Activated naive CD4-positive, alpha-beta T cell treated with anti-CD3 and anti-CD28 coated beads for 36 hours (primary cell): ENCODE measurements at regions of chr6 and their contacts with region 1.

Region 1: DNA sequence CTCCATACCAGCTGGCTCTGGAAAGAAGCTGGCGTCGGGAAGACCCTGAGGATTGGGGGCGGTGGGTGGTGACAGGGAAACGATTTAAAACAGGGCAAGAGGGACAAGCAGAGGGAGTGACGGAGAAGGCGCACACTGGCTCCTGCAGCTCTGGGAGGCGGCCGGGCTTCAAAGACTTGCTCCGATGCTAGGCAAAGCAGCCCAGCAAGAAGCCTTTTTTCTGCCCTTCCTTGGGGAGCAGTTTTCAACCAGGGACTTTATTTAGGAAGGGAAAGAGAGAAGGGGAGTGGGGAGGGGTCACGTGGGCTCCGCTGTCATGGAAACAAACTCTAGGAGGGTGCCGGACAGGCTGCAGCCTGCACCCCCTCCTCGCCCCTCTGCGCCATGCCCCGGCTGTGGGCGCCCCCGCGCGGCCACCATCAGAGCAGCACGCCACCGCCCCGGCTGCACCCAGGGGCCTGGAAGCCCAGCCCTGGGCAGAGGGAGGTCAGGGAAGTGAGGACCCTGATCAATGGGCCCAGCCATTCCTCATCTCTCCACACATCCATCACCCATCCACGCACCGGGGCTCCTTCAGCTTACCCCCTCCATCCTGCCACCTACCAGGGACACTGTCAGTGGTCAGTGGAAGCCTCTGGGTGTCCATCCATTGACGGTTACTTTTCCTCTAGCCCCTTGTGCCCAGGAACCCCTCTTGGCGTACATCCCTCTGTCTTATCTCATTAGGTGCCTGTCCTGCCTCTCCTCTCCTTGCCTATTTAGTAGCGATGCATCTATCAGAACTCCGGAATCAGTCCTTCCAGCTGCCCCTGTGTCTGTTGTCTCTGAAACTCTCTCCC is 66.6 kb upstream of the CCDC167 start:
- DNase-seq: peak; percentile 72
- H3K4me3 Mint-ChIP-seq: no peak overlapping the region
- H3K27ac Mint-ChIP-seq: no peak overlapping the region
- H3K4me1 Mint-ChIP-seq: peaks cover 2% of the 10 kb centered on the region
- H3K27me3 Mint-ChIP-seq: no peaks in the 10 kb centered on the region

Region 2: GRCh38 chr6:36735110-36736071 is 830.9 kb before region 1 on chr6:
- CTCF ChIA-PET with region 1: no interaction called
- intact Hi-C with region 1: no loop called
- DNase-seq: peak; percentile 87
- H3K4me3 Mint-ChIP-seq: peak overlapping the region; percentile 59
- H3K27ac Mint-ChIP-seq: peak overlapping the region; percentile 91
- H3K4me1 Mint-ChIP-seq: peaks cover 28% of the 10 kb centered on the region
- H3K27me3 Mint-ChIP-seq: no peaks in the 10 kb centered on the region

Region 3: GRCh38 chr6:36839749-36840431 is 726.4 kb before region 1 on chr6:
- CTCF ChIA-PET with region 1: no interaction called
- intact Hi-C with region 1: no loop called
- DNase-seq: peak; percentile 42
- H3K4me3 Mint-ChIP-seq: peak overlapping the region; percentile 72
- H3K27ac Mint-ChIP-seq: no peak overlapping the region
- H3K4me1 Mint-ChIP-seq: peaks cover 15% of the 10 kb centered on the region
- H3K27me3 Mint-ChIP-seq: peaks cover 28% of the 10 kb centered on the region

Region 4: DNA sequence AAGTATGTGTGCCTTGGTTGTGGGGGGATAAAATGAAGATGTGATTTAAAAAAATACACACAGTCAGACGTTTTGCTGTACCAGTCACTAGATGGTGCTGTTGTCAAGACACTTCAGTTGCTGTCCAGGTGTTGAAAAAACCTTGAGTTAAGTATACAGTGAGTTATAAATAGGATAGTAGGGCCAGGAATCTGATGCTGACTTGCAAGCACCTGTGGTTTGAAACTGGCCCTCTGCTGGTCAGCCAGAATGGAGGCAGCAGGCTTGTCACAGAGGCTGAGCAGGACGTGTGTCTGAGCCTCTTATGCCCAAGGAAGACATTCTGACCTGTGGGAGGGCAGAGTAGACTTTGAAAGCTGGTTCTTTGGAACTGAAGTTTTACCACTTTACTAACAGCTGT is 184.8 kb before region 1 on chr6:
- CTCF ChIA-PET with region 1: interaction called, 3 read pairs
- intact Hi-C with region 1: loop called (anchors 1 kb)
- DNase-seq: peak; percentile 43
- H3K4me3 Mint-ChIP-seq: no peak overlapping the region
- H3K27ac Mint-ChIP-seq: no peak overlapping the region
- H3K4me1 Mint-ChIP-seq: no peaks in the 10 kb centered on the region
- H3K27me3 Mint-ChIP-seq: no peaks in the 10 kb centered on the region

Region 5: DNA sequence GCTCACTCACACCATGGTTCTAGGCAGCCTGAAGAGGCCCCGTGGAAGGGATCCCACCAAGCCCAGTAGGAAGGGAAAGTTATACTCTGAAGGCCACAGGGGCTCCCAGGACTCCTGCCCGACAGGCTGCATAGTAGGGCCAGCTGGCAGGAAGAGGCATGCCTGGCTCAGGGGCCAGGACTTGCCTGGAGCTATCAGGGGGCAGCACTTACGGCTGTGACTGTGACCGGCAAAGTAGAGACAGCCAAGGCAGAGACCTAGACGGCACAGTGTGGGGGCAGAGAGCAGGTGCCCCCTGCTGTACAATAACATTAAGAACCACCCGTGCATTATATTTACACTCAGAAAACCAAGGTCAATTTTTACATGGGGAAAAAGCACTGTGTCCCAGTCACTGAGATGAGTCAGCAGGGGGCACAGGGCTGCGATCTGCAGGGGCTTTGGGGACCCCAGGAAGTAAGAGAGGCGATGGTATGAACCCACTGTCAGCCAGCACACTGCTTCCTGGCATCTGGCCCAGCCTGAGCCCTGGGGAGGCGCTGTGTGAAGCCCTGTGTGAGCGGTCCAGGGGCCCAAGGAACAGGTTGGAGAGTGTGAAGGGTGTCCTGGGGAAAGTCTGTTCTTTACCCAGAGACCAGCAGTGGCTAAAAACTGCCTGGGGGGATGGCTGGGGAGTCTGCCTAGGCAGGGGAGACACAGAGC is 76.5 kb before region 1 on chr6:
- CTCF ChIA-PET with region 1: interaction called, 54 read pairs
- intact Hi-C with region 1: no loop called
- DNase-seq: peak; percentile 40
- H3K4me3 Mint-ChIP-seq: no peak overlapping the region
- H3K27ac Mint-ChIP-seq: no peak overlapping the region
- H3K4me1 Mint-ChIP-seq: peaks cover 68% of the 10 kb centered on the region
- H3K27me3 Mint-ChIP-seq: no peaks in the 10 kb centered on the region

Region 6: GRCh38 chr6:37531026-37531425 is 35.3 kb before region 1 on chr6:
- CTCF ChIA-PET with region 1: interaction called, 44 read pairs
- intact Hi-C with region 1: loop called (anchors 2 kb)
- DNase-seq: no peak
- H3K4me3 Mint-ChIP-seq: no peak overlapping the region
- H3K27ac Mint-ChIP-seq: no peak overlapping the region
- H3K4me1 Mint-ChIP-seq: peaks cover 15% of the 10 kb centered on the region
- H3K27me3 Mint-ChIP-seq: no peaks in the 10 kb centered on the region

Region 7: DNA sequence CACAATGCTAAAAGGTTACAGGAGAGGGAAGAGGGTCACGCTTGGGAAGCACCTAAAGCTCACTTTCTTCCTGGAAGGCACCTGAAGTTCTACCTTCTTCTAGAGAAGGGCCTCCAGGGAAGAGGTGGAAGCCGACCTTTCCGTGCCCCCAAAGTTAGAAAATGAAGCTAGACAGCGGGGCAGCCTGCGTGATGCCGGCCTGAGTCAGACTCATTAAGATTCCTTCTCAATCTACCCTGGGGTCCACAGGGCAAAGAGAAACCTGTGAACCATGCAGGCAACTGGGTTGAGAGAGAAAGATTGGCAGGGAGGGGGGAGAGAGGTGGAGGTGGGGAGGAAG is 11.9 kb before region 1 on chr6:
- CTCF ChIA-PET with region 1: interaction called, 11 read pairs
- intact Hi-C with region 1: no loop called
- DNase-seq: no peak
- H3K4me3 Mint-ChIP-seq: no peak overlapping the region
- H3K27ac Mint-ChIP-seq: no peak overlapping the region
- H3K4me1 Mint-ChIP-seq: peaks cover 38% of the 10 kb centered on the region
- H3K27me3 Mint-ChIP-seq: no peaks in the 10 kb centered on the region

Region 8: GRCh38 chr6:37691904-37692806 is 125.8 kb after region 1 on chr6:
- CTCF ChIA-PET with region 1: interaction called, 11 read pairs
- intact Hi-C with region 1: loop called (anchors 5 kb)
- DNase-seq: peak; percentile 87
- H3K4me3 Mint-ChIP-seq: no peak overlapping the region
- H3K27ac Mint-ChIP-seq: no peak overlapping the region
- H3K4me1 Mint-ChIP-seq: peaks cover 21% of the 10 kb centered on the region
- H3K27me3 Mint-ChIP-seq: peaks cover 12% of the 10 kb centered on the region